Mammary epithelial cell (primary cell): ENCODE measurements at regions of chr13 and their contacts with region 1.

Region 1: GRCh38 chr13:43786773-43787517 is at the start of gene ENOX1:
- DNase-seq: peak; percentile 64
- H3K4me3 ChIP-seq: peak within 1 kb of the TSS; percentile 66 to 73 (median 72)
- H3K27ac ChIP-seq: peak within 1 kb of the TSS; percentile 40
- H3K4me1 ChIP-seq: peaks cover 19% of the 10 kb centered on the region
- H3K27me3 ChIP-seq: no peaks in the 10 kb centered on the region
- CTCF ChIP-seq: peak in 1 of 2 donors; percentile 31
- total RNA-seq, gene ENOX1: 0.17 to 1.2 TPM

Region 2: GRCh38 chr13:42594970-42595571 is 1191.9 kb before region 1 on chr13:
- CTCF ChIA-PET with region 1: interaction called, 15 read pairs
- dilution Hi-C with region 1: no loop called
- in situ Hi-C with region 1: no loop called
- intact Hi-C with region 1: no loop called
- DNase-seq: peak; percentile 48
- H3K4me3 ChIP-seq: no peak overlapping the region
- H3K27ac ChIP-seq: no peak overlapping the region
- H3K4me1 ChIP-seq: no peaks in the 10 kb centered on the region
- H3K27me3 ChIP-seq: no peaks in the 10 kb centered on the region
- CTCF ChIP-seq: peak; percentile 77 to 89

Region 3: DNA sequence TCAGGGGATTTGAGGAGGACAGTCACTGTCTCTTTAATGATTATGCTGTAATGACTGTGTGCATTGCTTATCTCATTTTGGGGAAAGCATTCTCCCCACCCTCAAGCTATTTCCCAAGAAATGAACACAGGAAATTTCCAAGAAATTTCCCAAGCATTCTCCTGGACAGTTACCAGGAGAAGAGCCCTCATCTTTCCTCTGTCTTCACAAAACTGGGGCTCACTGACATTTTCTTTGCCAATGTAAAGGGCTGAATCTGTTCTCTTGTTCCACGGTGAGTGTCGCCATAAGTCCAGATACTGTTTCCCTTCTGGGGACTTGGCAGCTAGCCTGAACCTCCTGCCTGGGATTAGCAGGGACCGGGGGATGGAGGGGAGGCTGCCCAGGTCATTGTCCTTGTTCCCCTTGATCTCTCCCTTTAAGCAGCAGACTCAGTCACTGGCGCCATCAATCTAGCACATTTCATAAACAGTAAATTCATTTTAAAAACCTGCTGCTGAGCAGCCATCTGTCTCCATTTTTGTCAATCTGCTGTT is 590.8 kb before region 1 on chr13:
- CTCF ChIA-PET with region 1: no interaction called
- dilution Hi-C with region 1: no loop called
- in situ Hi-C with region 1: no loop called
- intact Hi-C with region 1: loop called (anchors 5 kb)
- DNase-seq: no peak
- H3K4me3 ChIP-seq: no peak overlapping the region
- H3K27ac ChIP-seq: no peak overlapping the region
- H3K4me1 ChIP-seq: no peaks in the 10 kb centered on the region
- H3K27me3 ChIP-seq: no peaks in the 10 kb centered on the region
- CTCF ChIP-seq: peak in 1 of 2 donors; percentile 20

Region 4: DNA sequence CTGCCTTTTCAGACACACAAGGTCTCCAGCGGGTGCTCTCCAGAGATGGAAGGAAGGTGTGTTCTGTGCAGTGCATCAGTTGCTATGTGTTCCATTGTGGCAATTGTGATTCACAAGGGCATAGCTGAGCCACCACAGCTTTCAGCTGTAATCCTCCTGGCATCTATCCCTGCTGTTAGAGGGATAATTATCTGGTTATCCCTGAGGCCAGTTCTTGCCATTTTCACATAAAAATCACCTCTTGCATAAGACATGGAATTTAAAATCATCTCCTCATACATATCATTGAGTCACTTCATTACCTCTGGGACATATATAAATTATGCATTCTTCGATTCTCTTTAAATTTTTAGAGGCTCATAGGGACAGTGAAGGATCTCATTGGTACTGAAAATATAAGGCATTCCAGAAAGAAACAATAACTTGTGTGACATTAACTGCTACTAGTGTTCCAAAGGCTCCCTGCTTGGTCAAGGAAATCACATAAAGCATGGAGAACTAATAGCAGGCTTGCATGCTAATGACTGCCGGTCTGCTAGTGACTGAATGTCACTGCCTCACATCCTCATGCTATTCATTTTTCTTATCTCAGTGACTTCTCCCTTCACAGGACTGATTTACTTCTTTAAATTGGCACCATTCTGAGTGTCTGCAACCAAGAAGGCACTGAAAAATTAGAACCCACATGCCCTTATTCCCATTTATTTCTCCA is 214.1 kb before region 1 on chr13:
- CTCF ChIA-PET with region 1: no interaction called
- dilution Hi-C with region 1: no loop called
- in situ Hi-C with region 1: no loop called
- intact Hi-C with region 1: loop called (anchors 10 kb)
- DNase-seq: peak; percentile 69
- H3K4me3 ChIP-seq: no peak overlapping the region
- H3K27ac ChIP-seq: peak overlapping the region; percentile 63
- H3K4me1 ChIP-seq: peaks cover 25% of the 10 kb centered on the region
- H3K27me3 ChIP-seq: no peaks in the 10 kb centered on the region
- CTCF ChIP-seq: no peak

Region 5: DNA sequence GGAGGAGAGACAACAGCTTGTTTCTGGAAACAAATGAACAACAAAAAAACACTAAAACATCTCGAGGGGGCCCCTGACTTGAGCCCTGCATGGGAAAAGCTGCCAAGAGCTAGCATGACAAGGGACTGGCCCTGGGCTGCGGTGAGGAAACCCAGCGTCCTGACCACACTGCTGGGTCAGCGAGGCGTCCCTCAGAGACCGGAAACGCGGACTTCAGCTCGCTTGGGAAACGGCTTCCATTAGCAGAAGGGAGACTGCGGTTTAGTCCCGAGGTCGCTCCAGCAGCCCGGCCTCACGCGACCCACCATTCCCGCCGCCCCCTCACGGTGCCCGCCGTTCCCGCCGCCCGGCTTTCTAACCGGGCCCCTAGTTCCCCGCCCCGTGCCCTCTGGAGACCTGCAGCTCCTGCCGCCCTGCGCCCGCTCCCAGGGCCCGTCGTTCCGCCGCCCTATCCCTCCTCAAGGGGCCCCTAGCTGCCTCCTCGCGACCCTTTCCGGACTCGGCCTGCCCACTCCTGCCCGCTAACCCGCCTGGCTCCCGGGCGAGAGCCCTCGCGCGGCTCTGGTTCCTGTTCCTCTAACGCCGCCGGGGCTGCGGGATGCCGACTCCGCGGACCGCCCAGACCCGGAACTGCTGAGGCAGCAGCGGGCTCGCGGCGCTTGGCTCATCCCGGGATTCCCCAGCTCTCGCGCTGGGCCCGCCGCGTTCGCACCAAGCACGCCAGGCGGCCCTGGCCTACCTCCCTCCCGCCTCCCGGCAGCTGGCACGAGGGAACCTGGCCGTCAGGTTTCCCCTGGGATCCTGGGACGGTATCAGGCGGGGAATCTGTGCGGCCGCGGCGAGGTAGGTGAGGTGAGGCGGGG is 92.2 kb after region 1 on chr13 and contains the start of gene CCDC122:
- CTCF ChIA-PET with region 1: no interaction called
- dilution Hi-C with region 1: no loop called
- in situ Hi-C with region 1: no loop called
- intact Hi-C with region 1: loop called (anchors 5 kb)
- DNase-seq: peak; percentile 89
- H3K4me3 ChIP-seq: peak within 1 kb of the TSS; percentile 83 to 88 (median 88)
- H3K27ac ChIP-seq: peak within 1 kb of the TSS; percentile 87
- H3K4me1 ChIP-seq: peaks cover 22% of the 10 kb centered on the region
- H3K27me3 ChIP-seq: no peaks in the 10 kb centered on the region
- CTCF ChIP-seq: no peak
- total RNA-seq, gene CCDC122: 6.7 to 12.1 TPM